Caco-2 (cell line): ENCODE measurements at regions of chr12 and their contacts with region 1.

Region 1: DNA sequence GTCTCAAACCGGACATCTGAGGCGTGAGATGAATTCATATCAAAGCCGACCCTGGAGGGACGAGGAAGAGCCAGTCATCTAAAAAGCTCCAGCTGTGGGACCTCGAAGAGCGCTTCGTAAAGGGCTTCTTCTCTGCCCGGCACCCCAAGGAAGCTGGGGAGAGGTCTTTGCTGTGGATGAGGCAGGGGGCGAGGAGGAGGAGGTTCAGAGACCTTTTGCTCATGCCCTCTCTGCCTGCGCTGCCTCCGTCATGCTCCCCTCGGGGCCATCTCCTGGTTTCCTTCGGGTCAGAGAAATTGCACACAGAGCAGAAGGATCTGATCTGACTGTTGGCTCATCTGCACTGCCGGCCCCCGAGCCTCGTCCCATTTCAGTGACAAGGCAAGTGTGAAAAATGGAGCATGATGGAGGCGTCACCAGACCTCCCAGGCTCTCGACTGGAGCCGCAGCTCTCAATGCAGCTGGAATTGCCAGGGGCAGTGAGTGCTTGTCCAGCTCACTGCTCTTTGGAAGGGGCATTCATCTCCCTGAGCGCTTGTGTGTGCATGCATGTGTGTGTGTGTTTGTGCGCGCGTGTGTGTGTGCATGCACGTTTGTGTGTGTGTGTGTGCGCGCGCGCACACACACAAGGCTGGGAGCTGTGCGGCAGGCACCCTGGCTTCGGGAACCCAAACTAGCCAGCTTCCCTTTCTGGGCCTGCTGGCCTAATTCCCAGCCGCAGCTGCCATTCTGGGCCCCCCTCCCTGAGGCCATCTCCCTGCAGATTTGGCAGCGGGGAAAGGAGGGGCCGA is 9.2 kb downstream of the CABP1 start:
- DNase-seq: no peak
- H3K4me3 ChIP-seq: no peak overlapping the region
- H3K4me3 Mint-ChIP-seq: peak overlapping the region; percentile 59
- H3K27ac Mint-ChIP-seq: no peak overlapping the region
- H3K4me1 ChIP-seq: no peaks in the 10 kb centered on the region
- H3K4me1 Mint-ChIP-seq: peaks cover 6% of the 10 kb centered on the region
- H3K27me3 ChIP-seq: no peaks in the 10 kb centered on the region
- H3K27me3 Mint-ChIP-seq: peaks cover 3% of the 10 kb centered on the region
- CTCF ChIP-seq: no peak

Region 2: GRCh38 chr12:120327593-120327992 is 322.0 kb before region 1 on chr12 and contains the start of gene PLA2G1B:
- CTCF ChIA-PET with region 1: no interaction called
- POLR2A ChIA-PET with region 1: no interaction called
- intact Hi-C with region 1: loop called (anchors 1 kb)
- DNase-seq: no peak
- H3K4me3 ChIP-seq: no peak within 1 kb of the TSS
- H3K4me3 Mint-ChIP-seq: no peak within 1 kb of the TSS
- H3K27ac Mint-ChIP-seq: no peak within 1 kb of the TSS
- H3K4me1 ChIP-seq: no peaks in the 10 kb centered on the region
- H3K4me1 Mint-ChIP-seq: peaks cover 7% of the 10 kb centered on the region
- H3K27me3 ChIP-seq: no peaks in the 10 kb centered on the region
- H3K27me3 Mint-ChIP-seq: no peaks in the 10 kb centered on the region
- CTCF ChIP-seq: no peak
- total RNA-seq, gene PLA2G1B: not detected in 2 replicates

Region 3: GRCh38 chr12:120598674-120599463 is 50.8 kb before region 1 on chr12:
- CTCF ChIA-PET with region 1: interaction called, 10 read pairs
- POLR2A ChIA-PET with region 1: no interaction called
- intact Hi-C with region 1: no loop called
- DNase-seq: no peak
- H3K4me3 ChIP-seq: no peak overlapping the region
- H3K4me3 Mint-ChIP-seq: no peak overlapping the region
- H3K27ac Mint-ChIP-seq: no peak overlapping the region
- H3K4me1 ChIP-seq: no peaks in the 10 kb centered on the region
- H3K4me1 Mint-ChIP-seq: no peaks in the 10 kb centered on the region
- H3K27me3 ChIP-seq: no peaks in the 10 kb centered on the region
- H3K27me3 Mint-ChIP-seq: no peaks in the 10 kb centered on the region
- CTCF ChIP-seq: no peak

Region 4: DNA sequence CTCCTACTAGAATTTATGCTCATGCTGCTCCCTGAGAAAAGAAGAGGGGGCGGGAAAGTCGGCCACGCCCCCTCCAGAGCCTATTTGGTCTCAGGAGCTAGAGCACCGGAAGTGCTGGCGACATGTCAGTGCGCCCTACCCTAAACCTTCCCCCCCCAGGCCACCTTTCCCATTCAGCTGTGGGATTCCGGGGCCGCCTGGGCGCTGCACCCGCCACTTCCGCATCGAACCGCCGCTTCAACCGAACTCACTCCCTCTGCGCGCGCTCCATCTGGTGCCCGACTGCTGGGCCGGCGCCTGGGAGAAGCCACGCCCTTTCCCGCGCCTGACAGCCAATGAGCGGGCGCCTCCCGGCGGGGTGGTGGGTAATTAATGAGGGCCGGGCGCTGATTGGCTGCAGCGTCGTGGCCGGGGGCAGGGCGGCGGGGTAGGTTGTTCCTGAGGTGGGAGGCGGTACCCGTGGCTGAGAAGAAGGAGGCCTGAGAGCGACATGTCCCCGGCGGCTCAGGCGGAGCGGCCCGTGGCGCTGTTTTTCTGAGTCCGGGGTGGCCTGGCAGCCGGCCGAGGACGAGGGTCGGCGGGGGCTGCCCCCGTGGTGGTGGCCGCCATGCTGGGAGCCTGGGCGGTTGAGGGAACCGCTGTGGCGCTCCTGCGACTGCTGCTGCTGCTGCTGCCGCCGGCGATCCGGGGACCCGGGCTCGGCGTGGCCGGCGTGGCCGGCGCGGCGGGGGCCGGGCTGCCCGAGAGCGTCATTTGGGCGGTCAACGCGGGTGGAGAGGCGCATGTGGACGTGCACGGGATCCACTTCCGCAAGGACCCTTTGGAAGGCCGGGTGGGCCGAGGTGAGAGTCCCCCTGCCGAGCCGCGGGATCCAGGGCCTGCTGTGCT is 37.3 kb after region 1 on chr12 and contains the start of gene MLEC:
- CTCF ChIA-PET with region 1: interaction called, 11 read pairs
- POLR2A ChIA-PET with region 1: no interaction called
- intact Hi-C with region 1: loop called (anchors 5 kb)
- DNase-seq: peak; percentile 98 to 99
- H3K4me3 ChIP-seq: peak within 1 kb of the TSS; percentile 90
- H3K4me3 Mint-ChIP-seq: peak within 1 kb of the TSS; percentile 79
- H3K27ac Mint-ChIP-seq: peak within 1 kb of the TSS; percentile 85
- H3K4me1 ChIP-seq: peaks cover 31% of the 10 kb centered on the region
- H3K4me1 Mint-ChIP-seq: peaks cover 17% of the 10 kb centered on the region
- H3K27me3 ChIP-seq: no peaks in the 10 kb centered on the region
- H3K27me3 Mint-ChIP-seq: no peaks in the 10 kb centered on the region
- CTCF ChIP-seq: peak in 1 of 2 experiments; percentile 11
- total RNA-seq, gene MLEC: 143 and 150 TPM in 2 replicates

Region 5: DNA sequence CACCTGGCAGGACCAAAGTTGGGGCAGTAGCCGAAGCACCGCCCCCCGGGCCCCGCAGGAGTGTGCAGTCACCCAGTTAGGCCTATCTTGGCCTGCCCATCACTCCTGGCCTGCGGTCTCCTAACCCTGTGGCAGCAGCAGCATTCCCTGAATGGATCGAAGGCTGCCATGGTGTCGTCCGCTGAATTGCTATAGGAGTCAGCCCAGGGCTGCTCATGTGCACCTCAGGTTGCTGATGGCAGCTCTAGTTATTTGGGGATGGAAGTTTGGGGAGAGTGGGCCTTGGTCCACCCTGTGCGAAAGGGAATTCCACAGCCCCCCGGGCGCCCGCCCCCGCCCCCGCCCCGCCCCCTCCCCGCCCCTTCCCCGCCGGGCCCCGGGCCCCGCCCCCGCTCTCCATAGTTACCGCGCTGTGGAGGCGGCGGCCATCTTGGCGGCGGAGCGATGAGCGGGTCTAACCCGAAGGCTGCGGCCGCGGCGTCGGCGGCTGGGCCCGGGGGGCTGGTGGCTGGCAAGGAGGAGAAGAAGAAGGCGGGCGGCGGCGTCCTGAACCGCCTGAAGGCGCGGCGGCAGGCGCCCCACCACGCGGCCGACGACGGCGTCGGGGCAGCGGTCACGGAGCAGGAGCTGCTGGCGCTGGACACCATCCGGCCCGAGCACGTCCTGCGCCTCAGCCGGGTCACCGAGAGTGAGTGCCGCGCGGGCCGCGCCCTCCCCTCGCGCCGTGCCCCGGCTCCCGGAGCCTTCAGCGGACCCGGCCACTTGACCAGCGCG is 60.6 kb after region 1 on chr12 and contains the start of gene UNC119B:
- CTCF ChIA-PET with region 1: interaction called, 4 read pairs
- POLR2A ChIA-PET with region 1: interaction called, 9 read pairs
- intact Hi-C with region 1: loop called (anchors 1 kb)
- DNase-seq: peak; percentile 61 to 82
- H3K4me3 ChIP-seq: peak within 1 kb of the TSS; percentile 70
- H3K4me3 Mint-ChIP-seq: peak within 1 kb of the TSS; percentile 80
- H3K27ac Mint-ChIP-seq: peak within 1 kb of the TSS; percentile 45
- H3K4me1 ChIP-seq: peaks cover 9% of the 10 kb centered on the region
- H3K4me1 Mint-ChIP-seq: peaks cover 12% of the 10 kb centered on the region
- H3K27me3 ChIP-seq: no peaks in the 10 kb centered on the region
- H3K27me3 Mint-ChIP-seq: no peaks in the 10 kb centered on the region
- CTCF ChIP-seq: no peak
- total RNA-seq, gene UNC119B: 39.1 and 44.4 TPM in 2 replicates

Region 6: GRCh38 chr12:120833849-120834248 is 184.2 kb after region 1 on chr12:
- CTCF ChIA-PET with region 1: no interaction called
- POLR2A ChIA-PET with region 1: no interaction called
- intact Hi-C with region 1: no loop called
- DNase-seq: no peak
- H3K4me3 ChIP-seq: no peak overlapping the region
- H3K4me3 Mint-ChIP-seq: no peak overlapping the region
- H3K27ac Mint-ChIP-seq: no peak overlapping the region
- H3K4me1 ChIP-seq: peaks cover 19% of the 10 kb centered on the region
- H3K4me1 Mint-ChIP-seq: peaks cover 14% of the 10 kb centered on the region
- H3K27me3 ChIP-seq: no peaks in the 10 kb centered on the region
- H3K27me3 Mint-ChIP-seq: no peaks in the 10 kb centered on the region
- CTCF ChIP-seq: no peak

Region 7: GRCh38 chr12:120971299-120972179 is 321.9 kb after region 1 on chr12:
- CTCF ChIA-PET with region 1: interaction called, 14 read pairs
- POLR2A ChIA-PET with region 1: no interaction called
- intact Hi-C with region 1: no loop called
- DNase-seq: peak in 1 of 2 experiments; percentile 43
- H3K4me3 ChIP-seq: no peak overlapping the region
- H3K4me3 Mint-ChIP-seq: no peak overlapping the region
- H3K27ac Mint-ChIP-seq: no peak overlapping the region
- H3K4me1 ChIP-seq: peaks cover 36% of the 10 kb centered on the region
- H3K4me1 Mint-ChIP-seq: peaks cover 12% of the 10 kb centered on the region
- H3K27me3 ChIP-seq: no peaks in the 10 kb centered on the region
- H3K27me3 Mint-ChIP-seq: no peaks in the 10 kb centered on the region
- CTCF ChIP-seq: peak; percentile 45 to 68